MCF 10A (cell line): ENCODE measurements at regions of chr5 and their contacts with region 1.

Region 1: DNA sequence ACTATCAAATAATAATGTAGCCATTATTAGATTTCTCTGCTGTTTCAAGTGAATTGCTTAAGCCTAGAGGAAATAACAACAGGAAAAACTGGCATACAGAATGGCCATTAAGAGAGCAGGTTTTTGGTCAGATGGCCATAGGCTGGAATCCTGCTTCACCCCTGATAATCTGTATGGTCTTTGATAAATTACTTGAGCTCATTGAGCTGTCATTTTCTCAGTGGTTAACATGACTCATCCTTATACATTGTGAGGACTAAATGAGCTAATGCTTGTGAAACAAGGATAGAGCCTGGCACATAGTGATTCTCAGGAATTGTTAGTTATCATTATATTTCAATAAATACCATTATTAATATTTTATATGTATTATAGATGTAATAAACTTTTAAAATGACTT is 516.5 kb downstream of the KIF4B start:
- DNase-seq: peak; percentile 43
- H3K4me3 Mint-ChIP-seq: peak overlapping the region; percentile 22
- H3K27ac Mint-ChIP-seq: peak overlapping the region; percentile 81
- H3K4me1 Mint-ChIP-seq: peaks cover 47% of the 10 kb centered on the region
- H3K27me3 Mint-ChIP-seq: no peaks in the 10 kb centered on the region
- CTCF ChIP-seq: no peak

Region 2: DNA sequence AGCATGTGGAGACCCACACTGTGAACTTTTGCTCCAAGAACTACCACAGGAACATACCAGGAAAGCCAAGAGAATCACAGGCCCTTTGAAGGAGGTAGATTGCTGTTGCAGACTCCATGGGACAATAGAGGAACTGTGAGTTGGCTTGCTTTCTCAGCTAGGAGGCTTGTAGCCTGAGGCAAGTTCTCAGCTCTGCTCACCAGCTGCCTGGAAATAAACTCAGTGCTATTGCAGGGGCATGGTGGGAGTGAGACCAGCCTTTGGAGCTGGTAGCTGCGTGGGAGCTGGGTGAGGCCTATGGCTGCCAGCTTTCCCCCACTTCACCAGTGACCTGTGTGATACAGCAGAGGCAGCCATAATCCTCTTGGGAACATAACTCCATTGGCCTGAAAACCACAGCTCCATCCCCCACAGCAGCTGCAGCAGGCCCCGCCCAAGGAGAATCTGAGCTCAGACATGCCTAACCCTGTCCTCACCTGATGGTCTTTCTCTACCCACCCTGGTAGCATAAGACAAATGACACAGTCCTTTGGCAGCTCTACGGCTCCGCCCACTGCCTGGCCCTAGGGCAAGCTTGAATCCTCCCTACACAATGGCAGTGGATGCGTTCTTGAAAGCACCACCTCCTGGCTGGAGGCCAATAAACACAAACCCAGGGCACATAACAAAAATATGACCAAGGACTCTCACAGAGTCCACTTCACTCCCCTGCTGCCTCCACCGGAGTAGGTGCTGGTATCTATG is 126.9 kb before region 1 on chr5:
- CTCF ChIA-PET with region 1: no interaction called
- POLR2A ChIA-PET with region 1: interaction called, 14 read pairs
- intact Hi-C with region 1: no loop called
- DNase-seq: peak; percentile 80
- H3K4me3 Mint-ChIP-seq: peak overlapping the region; percentile 52
- H3K27ac Mint-ChIP-seq: peak overlapping the region; percentile 88
- H3K4me1 Mint-ChIP-seq: peaks cover 25% of the 10 kb centered on the region
- H3K27me3 Mint-ChIP-seq: no peaks in the 10 kb centered on the region
- CTCF ChIP-seq: no peak

Region 3: DNA sequence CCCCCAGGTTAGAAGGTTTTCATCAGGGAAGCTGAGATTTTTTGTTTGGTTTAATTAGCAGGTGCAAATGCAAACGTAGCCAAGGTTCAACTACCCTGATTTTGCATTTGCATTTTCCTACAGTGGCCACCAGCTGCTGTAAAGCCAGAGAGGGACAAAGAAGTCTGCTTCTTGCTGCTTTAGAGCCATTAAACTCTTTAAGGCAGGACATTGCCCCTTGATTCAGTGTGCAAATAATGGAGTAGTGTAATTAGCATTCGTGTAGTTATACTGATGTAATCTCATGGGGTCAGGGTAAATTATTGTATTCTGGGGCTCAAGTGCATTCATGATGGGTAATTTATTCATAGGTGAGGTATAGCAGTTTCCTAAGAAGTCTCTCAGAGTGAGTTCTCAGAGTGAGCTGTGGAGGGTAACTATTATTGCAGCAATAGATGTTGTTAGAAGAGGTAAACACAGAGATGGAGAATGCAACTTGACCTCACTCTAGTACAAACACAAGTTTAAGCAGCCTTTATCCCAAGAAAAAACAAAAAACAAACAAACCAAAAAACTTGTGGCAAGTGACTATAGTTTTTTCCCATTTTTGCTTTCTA is 10.1 kb after region 1 on chr5:
- CTCF ChIA-PET with region 1: interaction called, 4 read pairs
- POLR2A ChIA-PET with region 1: interaction called, 24 read pairs
- intact Hi-C with region 1: no loop called
- DNase-seq: no peak
- H3K4me3 Mint-ChIP-seq: no peak overlapping the region
- H3K27ac Mint-ChIP-seq: no peak overlapping the region
- H3K4me1 Mint-ChIP-seq: peaks cover 12% of the 10 kb centered on the region
- H3K27me3 Mint-ChIP-seq: no peaks in the 10 kb centered on the region
- CTCF ChIP-seq: no peak

Region 4: GRCh38 chr5:155546075-155546474 is 16.0 kb after region 1 on chr5:
- CTCF ChIA-PET with region 1: interaction called, 3 read pairs
- POLR2A ChIA-PET with region 1: interaction called, 24 read pairs
- intact Hi-C with region 1: no loop called
- DNase-seq: peak; percentile 5
- H3K4me3 Mint-ChIP-seq: no peak overlapping the region
- H3K27ac Mint-ChIP-seq: peak overlapping the region; percentile 78
- H3K4me1 Mint-ChIP-seq: peaks cover 22% of the 10 kb centered on the region
- H3K27me3 Mint-ChIP-seq: no peaks in the 10 kb centered on the region
- CTCF ChIP-seq: no peak